Activated CD4-positive, alpha-beta T cell treated with anti-CD3 and anti-CD28 coated beads, Interleukin-2, amount 10 ng/mL, durations not matched to agents 24 days and 14 days (primary cell): ENCODE measurements at regions of chr11 and their contacts with region 1.

Region 1: DNA sequence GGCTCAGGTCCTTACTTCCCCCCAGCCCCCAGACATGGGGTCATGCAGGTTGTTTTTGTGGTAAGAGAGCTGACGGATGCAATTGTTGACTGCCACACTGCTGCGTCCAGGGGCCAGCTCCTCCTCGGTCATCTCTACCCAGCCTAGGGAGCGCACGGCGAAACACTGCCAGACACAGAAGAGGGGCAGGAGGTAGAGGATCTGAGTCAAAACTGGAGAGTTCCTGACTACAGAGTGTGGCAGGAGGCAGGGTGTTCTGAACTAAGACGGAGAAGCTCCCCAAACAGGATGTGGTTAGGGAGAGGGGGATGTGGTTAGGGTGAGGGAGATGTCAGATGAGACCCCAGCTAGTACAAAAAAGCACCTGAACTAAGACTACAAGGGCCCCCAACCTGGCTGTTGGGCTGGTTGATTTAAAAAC is 12.3 kb downstream of the SMPD1 start:
- DNase-seq: peak; percentile 95
- H3K4me3 Mint-ChIP-seq: peak overlapping the region; percentile 85
- H3K27ac Mint-ChIP-seq: peak overlapping the region; percentile 96
- H3K4me1 Mint-ChIP-seq: peaks cover 57% of the 10 kb centered on the region
- H3K27me3 Mint-ChIP-seq: no peaks in the 10 kb centered on the region

Region 2: GRCh38 chr11:5737670-5738392 is 664.7 kb before region 1 on chr11:
- intact Hi-C with region 1: no loop called
- DNase-seq: no peak
- H3K4me3 Mint-ChIP-seq: no peak overlapping the region
- H3K27ac Mint-ChIP-seq: no peak overlapping the region
- H3K4me1 Mint-ChIP-seq: no peaks in the 10 kb centered on the region
- H3K27me3 Mint-ChIP-seq: peaks cover 7% of the 10 kb centered on the region

Region 3: DNA sequence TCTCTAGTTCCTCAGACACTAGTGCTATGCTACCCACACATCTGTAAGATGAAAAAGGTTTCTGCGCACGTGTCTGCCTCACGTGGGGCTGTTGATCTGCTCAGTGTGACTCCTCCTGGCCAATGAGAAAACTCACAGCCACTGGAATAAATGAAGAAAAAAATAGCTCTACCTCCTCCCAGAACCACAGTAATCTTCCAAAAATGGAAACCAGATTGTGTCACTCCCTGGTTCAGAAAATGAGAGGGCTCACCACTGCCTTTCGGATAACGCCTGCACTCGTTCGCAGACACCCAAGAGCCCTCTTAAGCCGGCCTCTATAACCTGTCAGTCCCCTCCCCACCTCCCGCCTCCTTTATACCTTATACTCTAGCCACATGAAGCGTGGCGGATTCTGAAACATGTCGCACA is 11.2 kb after region 1 on chr11:
- intact Hi-C with region 1: loop called (anchors 1 kb)
- DNase-seq: peak; percentile 82
- H3K4me3 Mint-ChIP-seq: no peak overlapping the region
- H3K27ac Mint-ChIP-seq: no peak overlapping the region
- H3K4me1 Mint-ChIP-seq: peaks cover 11% of the 10 kb centered on the region
- H3K27me3 Mint-ChIP-seq: no peaks in the 10 kb centered on the region

Region 4: GRCh38 chr11:6443269-6444003 is 40.9 kb after region 1 on chr11:
- intact Hi-C with region 1: loop called (anchors 5 kb)
- DNase-seq: peak; percentile 87
- H3K4me3 Mint-ChIP-seq: no peak overlapping the region
- H3K27ac Mint-ChIP-seq: no peak overlapping the region
- H3K4me1 Mint-ChIP-seq: no peaks in the 10 kb centered on the region
- H3K27me3 Mint-ChIP-seq: peaks cover 11% of the 10 kb centered on the region